CD8-positive, alpha-beta memory T cell (primary cell): ENCODE measurements at regions of chr7 and their contacts with region 1.

Region 1: GRCh38 chr7:76314042-76314721 is 11.7 kb downstream of the HSPB1 start:
- DNase-seq: peak; percentile 90 to 96 (median 94)
- H3K4me3 ChIP-seq: no peak overlapping the region
- H3K4me3 Mint-ChIP-seq: peak overlapping the region in 3 of 7 donors; percentile 37 to 64 (median 59)
- H3K27ac ChIP-seq: no peak overlapping the region
- H3K27ac Mint-ChIP-seq: peak overlapping the region in 4 of 8 donors; percentile 10 to 68 (median 64)
- H3K4me1 ChIP-seq: peaks cover 22% of the 10 kb centered on the region
- H3K4me1 Mint-ChIP-seq: peaks cover 18 to 23% (median 22%) of the 10 kb centered on the region in 3 donors
- H3K27me3 ChIP-seq: no peaks in the 10 kb centered on the region
- H3K27me3 Mint-ChIP-seq: no peaks in the 10 kb centered on the region

Region 2: DNA sequence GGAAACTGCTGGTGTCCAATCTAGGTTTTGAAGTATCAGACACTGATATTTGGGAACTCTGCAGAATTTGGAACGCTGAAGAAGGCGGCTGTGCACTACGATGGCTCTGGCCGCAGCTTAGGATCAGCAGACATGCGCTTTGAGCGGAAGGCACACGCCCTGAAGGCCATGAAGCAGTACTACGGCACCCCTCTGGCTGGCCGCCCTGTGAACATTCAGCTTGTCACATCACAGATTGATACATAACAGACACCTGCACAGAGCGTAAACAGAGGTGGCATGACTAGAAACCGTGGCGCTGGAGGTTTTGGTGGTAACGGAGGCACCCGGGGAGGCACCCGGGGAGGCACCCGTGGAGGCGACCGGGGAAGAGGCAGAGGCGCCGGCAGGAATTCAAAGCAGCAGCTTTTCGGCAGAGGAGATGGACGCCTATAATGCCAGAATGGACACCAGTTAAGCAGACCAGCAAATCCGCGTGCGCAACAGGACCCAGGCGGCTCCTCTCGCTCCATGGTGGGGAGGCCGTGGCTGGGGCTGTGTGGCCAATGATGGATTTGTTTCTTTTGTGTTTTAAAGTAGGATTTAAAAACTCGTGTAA is 478.4 kb before region 1 on chr7:
- CTCF ChIA-PET with region 1: no interaction called
- POLR2A ChIA-PET with region 1: no interaction called
- DNase-seq: no peak
- H3K4me3 ChIP-seq: no peak overlapping the region
- H3K4me3 Mint-ChIP-seq: no peak overlapping the region
- H3K27ac ChIP-seq: no peak overlapping the region
- H3K27ac Mint-ChIP-seq: peak overlapping the region in 1 of 8 donors; percentile 78
- H3K4me1 ChIP-seq: no peaks in the 10 kb centered on the region
- H3K4me1 Mint-ChIP-seq: no peaks in the 10 kb centered on the region
- H3K27me3 ChIP-seq: no peaks in the 10 kb centered on the region
- H3K27me3 Mint-ChIP-seq: peaks cover 0 to 1% of the 10 kb centered on the region in 2 donors

Region 3: GRCh38 chr7:76133164-76133775 is 180.9 kb before region 1 on chr7:
- CTCF ChIA-PET with region 1: no interaction called
- POLR2A ChIA-PET with region 1: no interaction called
- DNase-seq: no peak
- H3K4me3 ChIP-seq: no peak overlapping the region
- H3K4me3 Mint-ChIP-seq: peak overlapping the region in 4 of 7 donors; percentile 17 to 64 (median 35)
- H3K27ac ChIP-seq: no peak overlapping the region
- H3K27ac Mint-ChIP-seq: peak overlapping the region in 5 of 8 donors; percentile 9 to 40 (median 23)
- H3K4me1 ChIP-seq: peaks cover 7% of the 10 kb centered on the region
- H3K4me1 Mint-ChIP-seq: peaks cover 5 to 12% (median 10%) of the 10 kb centered on the region in 3 donors
- H3K27me3 ChIP-seq: no peaks in the 10 kb centered on the region
- H3K27me3 Mint-ChIP-seq: peaks cover 37 to 45% of the 10 kb centered on the region in 2 donors

Region 4: DNA sequence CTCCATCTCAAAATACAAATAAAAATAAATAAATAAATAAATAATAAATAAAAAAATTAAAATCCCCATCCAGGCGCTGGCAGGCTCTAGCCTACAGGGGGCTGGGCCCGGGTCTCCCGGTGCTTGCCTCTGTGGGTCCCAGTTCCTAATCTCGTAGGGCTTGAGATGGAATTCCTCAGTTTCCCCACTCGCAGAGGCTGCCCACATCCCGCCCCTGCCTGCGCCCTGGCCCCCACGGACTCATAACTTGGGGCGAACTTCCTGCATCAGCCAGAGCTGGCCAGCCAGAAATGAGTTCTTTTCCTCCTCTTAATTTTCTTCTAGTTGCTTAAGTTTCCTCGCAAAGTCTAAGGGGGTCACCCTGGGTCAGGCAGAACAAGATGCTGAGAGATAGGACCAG is 134.5 kb before region 1 on chr7:
- CTCF ChIA-PET with region 1: interaction called, 52 read pairs
- POLR2A ChIA-PET with region 1: interaction called, 3 read pairs
- DNase-seq: no peak
- H3K4me3 ChIP-seq: no peak overlapping the region
- H3K4me3 Mint-ChIP-seq: no peak overlapping the region
- H3K27ac ChIP-seq: no peak overlapping the region
- H3K27ac Mint-ChIP-seq: no peak overlapping the region
- H3K4me1 ChIP-seq: no peaks in the 10 kb centered on the region
- H3K4me1 Mint-ChIP-seq: peaks cover 2 to 5% (median 4%) of the 10 kb centered on the region in 3 donors
- H3K27me3 ChIP-seq: no peaks in the 10 kb centered on the region
- H3K27me3 Mint-ChIP-seq: peaks cover 2 to 3% of the 10 kb centered on the region in 2 donors

Region 5: DNA sequence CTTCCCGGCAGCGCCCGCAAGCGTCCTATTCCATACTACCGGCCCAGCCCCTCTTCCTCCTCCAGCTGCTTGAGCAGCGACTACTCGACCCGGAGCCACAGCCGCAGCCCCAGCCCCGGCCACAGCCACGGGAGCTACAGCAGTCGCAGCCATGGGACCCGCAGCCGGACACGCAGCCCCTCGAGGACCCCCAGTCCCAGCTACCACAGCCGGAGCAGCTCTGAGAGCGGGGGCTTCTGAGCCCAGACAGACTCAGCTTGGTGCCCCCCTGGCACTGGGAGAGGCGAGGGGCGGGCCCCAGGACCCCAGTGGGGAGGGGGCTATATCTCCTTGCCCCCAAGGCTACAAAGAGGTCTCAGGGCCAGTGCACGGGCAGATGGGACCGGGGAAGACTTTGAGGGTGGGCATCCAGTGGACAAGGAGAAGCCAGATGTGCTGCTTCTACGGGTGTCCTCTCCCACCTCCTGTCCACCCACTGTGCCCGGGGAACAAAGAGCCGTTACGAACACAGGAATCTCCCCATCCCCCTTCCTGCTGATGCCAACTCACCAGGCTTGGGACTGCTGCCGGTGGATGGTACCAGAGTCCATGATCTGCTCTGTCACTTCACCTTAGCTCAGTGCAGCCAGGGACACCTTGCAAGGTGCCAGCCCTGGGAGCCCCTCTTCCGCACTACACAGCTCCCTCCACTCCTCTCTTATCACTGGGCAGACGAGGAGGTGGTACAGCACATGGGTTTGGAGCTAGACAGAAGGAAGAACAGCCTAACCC is 28.4 kb before region 1 on chr7:
- CTCF ChIA-PET with region 1: interaction called, 70 read pairs
- POLR2A ChIA-PET with region 1: no interaction called
- DNase-seq: no peak
- H3K4me3 ChIP-seq: no peak overlapping the region
- H3K4me3 Mint-ChIP-seq: peak overlapping the region in 1 of 7 donors; percentile 64
- H3K27ac ChIP-seq: no peak overlapping the region
- H3K27ac Mint-ChIP-seq: peak overlapping the region in 1 of 8 donors; percentile 66
- H3K4me1 ChIP-seq: peaks cover 11% of the 10 kb centered on the region
- H3K4me1 Mint-ChIP-seq: peaks cover 14 to 19% (median 18%) of the 10 kb centered on the region in 3 donors
- H3K27me3 ChIP-seq: peaks cover 14% of the 10 kb centered on the region
- H3K27me3 Mint-ChIP-seq: peaks cover 27 to 29% of the 10 kb centered on the region in 2 donors

Region 6: DNA sequence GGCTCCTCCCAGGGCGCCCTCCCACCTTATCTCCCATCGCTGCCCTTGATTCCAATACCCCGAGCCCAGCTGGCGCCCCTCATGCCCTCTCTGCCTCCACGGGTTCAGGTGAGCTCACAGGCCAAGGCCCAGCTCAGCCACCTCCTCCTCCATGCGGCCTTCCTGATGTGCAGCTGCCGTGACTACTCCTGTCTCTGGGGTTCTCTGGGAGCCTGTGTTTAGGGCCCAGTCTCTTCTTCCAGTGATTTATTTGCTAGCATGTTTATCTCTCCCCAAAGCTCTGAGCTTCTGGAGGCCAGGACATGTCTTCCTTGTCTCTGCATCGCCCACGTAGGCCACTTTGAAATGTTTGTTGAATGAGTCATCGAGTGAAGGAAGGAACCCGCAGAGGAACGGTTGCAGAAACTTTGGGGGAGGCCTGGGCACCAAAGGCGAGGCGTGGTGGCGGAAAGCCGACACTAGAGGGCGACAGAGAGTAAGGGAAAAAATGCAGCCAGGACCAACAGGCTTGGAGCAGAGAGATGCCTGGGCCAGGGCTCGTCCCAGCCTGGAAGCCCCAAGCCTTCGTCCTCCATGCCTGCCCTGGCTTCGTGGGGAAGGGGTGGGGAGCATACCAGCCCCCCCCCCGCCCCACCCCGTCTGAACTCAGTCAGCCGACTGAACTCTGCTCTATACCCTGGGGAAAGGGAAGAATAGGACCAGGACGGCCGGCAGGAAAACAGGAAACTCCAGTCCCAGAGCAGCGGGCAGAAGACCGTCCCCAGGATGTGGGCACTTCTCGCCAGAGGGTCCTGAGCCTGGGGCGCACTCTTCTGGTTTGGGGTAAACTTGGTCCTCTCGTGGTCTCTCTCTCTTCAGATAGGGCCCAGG is 22.6 kb before region 1 on chr7:
- CTCF ChIA-PET with region 1: interaction called, 70 read pairs
- POLR2A ChIA-PET with region 1: no interaction called
- DNase-seq: peak; percentile 68 to 87 (median 75)
- H3K4me3 ChIP-seq: no peak overlapping the region
- H3K4me3 Mint-ChIP-seq: no peak overlapping the region
- H3K27ac ChIP-seq: peak overlapping the region; percentile 38
- H3K27ac Mint-ChIP-seq: peak overlapping the region in 2 of 8 donors; percentile 3 to 66
- H3K4me1 ChIP-seq: peaks cover 10% of the 10 kb centered on the region
- H3K4me1 Mint-ChIP-seq: peaks cover 4 to 8% (median 6%) of the 10 kb centered on the region in 3 donors
- H3K27me3 ChIP-seq: no peaks in the 10 kb centered on the region
- H3K27me3 Mint-ChIP-seq: peaks cover 4 to 9% of the 10 kb centered on the region in 2 donors

Region 7: GRCh38 chr7:76302347-76303201 is 11.6 kb before region 1 on chr7 and contains the start of gene HSPB1:
- CTCF ChIA-PET with region 1: interaction called, 44 read pairs
- POLR2A ChIA-PET with region 1: interaction called, 5 read pairs
- DNase-seq: peak; percentile 33 to 77 (median 53)
- H3K4me3 ChIP-seq: peak within 1 kb of the TSS; percentile 73
- H3K4me3 Mint-ChIP-seq: peak within 1 kb of the TSS; percentile 88 to 97 (median 92)
- H3K27ac ChIP-seq: peak within 1 kb of the TSS; percentile 65
- H3K27ac Mint-ChIP-seq: peak within 1 kb of the TSS; percentile 77 to 96 (median 86)
- H3K4me1 ChIP-seq: peaks cover 7% of the 10 kb centered on the region
- H3K4me1 Mint-ChIP-seq: peaks cover 18 to 20% (median 18%) of the 10 kb centered on the region in 3 donors
- H3K27me3 ChIP-seq: no peaks in the 10 kb centered on the region
- H3K27me3 Mint-ChIP-seq: peaks cover 0 to 5% of the 10 kb centered on the region in 2 donors
- total RNA-seq, gene HSPB1: 80.7 to 84.1 TPM

Region 8: DNA sequence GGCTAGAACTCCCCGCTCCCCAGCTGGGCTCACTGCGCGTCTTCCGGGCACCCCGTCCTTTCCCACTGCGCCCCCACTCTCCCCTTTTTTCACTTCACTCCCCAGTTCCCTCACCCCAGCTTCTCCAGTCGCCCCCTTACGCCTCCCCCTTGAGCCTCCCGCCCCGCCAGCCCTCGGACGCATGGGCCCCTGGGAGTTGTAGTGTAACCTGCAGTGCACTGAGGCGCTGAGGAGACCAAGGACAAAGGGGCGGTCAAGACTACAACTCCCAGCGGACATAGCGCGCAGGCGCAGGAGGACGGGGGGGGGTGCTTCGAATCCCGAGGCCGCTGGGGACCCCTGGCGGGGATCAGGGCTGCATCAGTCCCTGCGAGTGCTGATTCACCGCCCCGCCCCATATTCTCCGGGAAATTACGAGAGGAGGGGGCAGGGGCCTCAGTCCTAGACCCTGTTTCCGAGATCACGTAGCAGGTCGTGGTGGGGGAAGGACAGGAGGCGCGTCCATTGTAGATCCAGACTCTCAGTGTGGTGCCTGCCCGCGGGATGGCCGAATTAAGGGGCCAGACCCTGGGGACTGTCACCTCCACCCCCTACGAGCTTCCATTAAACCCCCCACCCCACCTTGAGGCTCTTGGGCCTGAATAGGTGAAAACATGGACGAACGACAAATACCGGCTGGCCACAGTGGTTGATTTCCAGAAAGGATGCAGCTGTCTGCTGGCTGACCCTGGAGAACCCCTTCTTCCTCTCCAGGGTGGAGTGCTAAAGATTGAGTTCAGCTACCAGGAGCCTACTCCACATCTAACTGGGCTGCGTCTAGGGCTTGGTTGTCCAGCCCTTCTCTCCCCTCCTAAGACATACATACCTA is 45.2 kb after region 1 on chr7:
- CTCF ChIA-PET with region 1: interaction called, 20 read pairs
- POLR2A ChIA-PET with region 1: interaction called, 62 read pairs
- DNase-seq: peak; percentile 90 to 97 (median 95)
- H3K4me3 ChIP-seq: peak overlapping the region; percentile 71
- H3K4me3 Mint-ChIP-seq: peak overlapping the region; percentile 88 to 97 (median 92)
- H3K27ac ChIP-seq: peak overlapping the region; percentile 88
- H3K27ac Mint-ChIP-seq: peak overlapping the region; percentile 92 to 98 (median 96)
- H3K4me1 ChIP-seq: peaks cover 31% of the 10 kb centered on the region
- H3K4me1 Mint-ChIP-seq: peaks cover 35 to 44% (median 39%) of the 10 kb centered on the region in 3 donors
- H3K27me3 ChIP-seq: no peaks in the 10 kb centered on the region
- H3K27me3 Mint-ChIP-seq: peaks cover 0 to 4% of the 10 kb centered on the region in 2 donors